Gastrocnemius medialis (tissue), 4 donors: ENCODE measurements at regions of chr4 and their contacts with region 1.

Region 1: DNA sequence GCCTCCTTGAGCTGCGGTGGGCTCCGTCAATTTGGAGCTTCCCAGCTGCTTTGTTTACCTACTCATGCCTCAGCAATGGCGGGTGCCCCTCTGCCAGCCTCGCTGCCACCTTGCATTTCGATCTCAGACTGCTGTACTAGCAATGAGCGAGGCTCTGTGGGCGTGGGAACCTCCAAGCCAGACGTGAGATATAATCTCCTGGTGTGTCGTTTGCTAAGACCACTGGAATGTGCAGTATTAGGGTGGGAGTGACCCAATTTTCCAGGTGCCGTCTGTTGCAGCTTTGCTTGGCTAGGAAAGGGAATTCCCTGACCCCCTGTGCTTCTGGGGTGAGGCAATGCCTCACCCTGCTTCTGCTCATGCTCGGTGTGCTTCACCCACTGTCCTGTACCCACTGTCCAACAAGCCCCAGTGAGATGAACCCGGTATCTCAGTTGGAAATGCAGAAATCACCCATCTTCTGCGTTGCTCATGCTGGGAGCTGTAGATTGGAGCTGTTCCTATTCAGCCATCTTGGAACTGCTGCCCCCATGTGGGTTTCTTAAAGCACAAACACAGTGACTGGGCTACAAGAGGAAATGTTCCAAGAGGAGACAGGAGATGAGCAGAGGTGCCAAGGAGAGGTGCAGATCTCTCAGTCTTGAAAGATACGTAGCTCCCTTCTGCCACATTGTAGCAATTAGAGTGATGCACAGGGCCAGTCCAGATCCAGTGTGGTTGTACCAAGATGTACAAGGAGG is 193.0 kb upstream of the IGFBP7 start:
- DNase-seq: no peak
- ATAC-seq: no peak
- H3K4me3 ChIP-seq: no peak overlapping the region
- H3K27ac ChIP-seq: no peak overlapping the region
- H3K4me1 ChIP-seq: no peaks in the 10 kb centered on the region
- H3K27me3 ChIP-seq: no peaks in the 10 kb centered on the region
- CTCF ChIP-seq: no peak
- POLR2A ChIP-seq: no peak

Region 2: DNA sequence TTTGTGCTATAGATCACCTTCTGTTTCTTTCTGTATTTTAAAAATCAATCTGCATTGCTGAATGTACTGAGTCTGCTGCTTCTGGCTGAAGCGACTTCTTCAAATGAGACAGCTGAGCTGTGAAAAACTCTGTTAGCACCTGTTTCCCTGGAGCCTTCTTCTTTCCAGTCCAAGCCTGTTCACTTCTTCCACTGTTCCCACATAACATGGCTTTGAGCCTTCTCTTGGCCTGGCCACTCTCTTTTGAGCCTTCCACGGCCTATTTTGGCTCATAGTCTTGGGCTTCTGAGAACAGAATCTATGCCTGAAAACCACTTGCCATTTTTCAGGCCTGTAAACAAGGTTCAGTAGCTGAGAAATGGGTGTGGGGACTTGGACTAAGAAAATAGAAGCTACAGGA is 60.1 kb before region 1 on chr4:
- in situ Hi-C with region 1: no loop called
- intact Hi-C with region 1: no loop called
- DNase-seq: no peak
- ATAC-seq: no peak
- H3K4me3 ChIP-seq: no peak overlapping the region
- H3K27ac ChIP-seq: no peak overlapping the region
- H3K4me1 ChIP-seq: no peaks in the 10 kb centered on the region
- H3K27me3 ChIP-seq: no peaks in the 10 kb centered on the region
- CTCF ChIP-seq: no peak
- POLR2A ChIP-seq: no peak

Region 3: DNA sequence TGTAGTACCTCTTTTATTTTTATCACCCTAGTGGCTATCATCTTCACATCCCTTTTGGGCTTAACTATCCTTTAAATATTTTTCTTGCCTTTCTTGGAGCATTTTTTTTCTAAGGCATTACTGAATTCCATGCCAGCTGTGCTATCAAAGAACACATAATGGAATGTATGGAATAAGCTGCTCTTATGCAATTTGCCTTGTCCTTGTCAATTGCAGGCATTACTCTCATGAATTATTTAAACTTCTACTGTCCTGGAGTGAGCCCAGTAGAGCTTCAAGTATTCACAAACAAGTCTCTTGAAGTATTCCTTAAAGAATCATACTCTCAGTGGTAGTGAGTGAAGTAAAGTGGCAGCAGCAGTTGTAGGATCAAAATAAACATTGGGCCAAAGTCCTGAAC is 48.4 kb before region 1 on chr4:
- in situ Hi-C with region 1: no loop called
- intact Hi-C with region 1: no loop called
- DNase-seq: no peak
- ATAC-seq: no peak
- H3K4me3 ChIP-seq: no peak overlapping the region
- H3K27ac ChIP-seq: no peak overlapping the region
- H3K4me1 ChIP-seq: no peaks in the 10 kb centered on the region
- H3K27me3 ChIP-seq: no peaks in the 10 kb centered on the region
- CTCF ChIP-seq: no peak
- POLR2A ChIP-seq: no peak

Region 4: DNA sequence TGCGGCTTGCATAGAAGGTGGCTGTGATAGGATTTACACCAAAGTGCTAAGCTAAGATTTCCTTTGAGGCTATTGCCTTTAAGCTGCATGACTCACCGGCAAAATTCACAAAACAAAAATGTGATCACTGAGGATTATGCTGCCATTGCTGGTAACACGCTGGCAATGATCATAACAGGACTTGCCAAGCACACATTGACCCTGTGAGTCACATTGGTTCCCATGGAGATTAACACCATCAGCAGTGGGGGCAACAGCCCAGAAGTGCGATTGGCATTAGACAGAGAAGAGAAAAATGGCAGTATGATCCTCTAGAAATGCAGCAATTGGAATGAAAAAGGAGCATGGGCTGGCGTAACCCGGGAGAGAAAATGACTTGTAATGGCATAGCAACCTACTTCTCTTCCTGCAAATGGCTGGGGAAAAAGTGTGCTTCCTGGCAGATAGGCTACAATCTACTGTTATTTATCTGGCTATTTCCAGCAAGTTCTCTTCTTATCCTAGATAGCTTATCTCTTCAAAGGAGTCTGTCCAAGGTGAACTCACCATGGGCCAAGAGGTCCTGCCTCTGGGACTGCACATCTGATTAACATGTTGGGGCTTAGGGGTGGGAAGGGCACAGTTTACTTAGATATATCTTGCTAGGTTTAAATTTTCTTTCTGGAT is 121.2 kb after region 1 on chr4:
- in situ Hi-C with region 1: loop called in 1 of 4 experiments (anchors 25 kb)
- intact Hi-C with region 1: no loop called
- DNase-seq: no peak
- ATAC-seq: no peak
- H3K4me3 ChIP-seq: no peak overlapping the region
- H3K27ac ChIP-seq: no peak overlapping the region
- H3K4me1 ChIP-seq: no peaks in the 10 kb centered on the region
- H3K27me3 ChIP-seq: no peaks in the 10 kb centered on the region
- CTCF ChIP-seq: no peak
- POLR2A ChIP-seq: no peak